Mammary epithelial cell (primary cell): ENCODE measurements at regions of chr15 and their contacts with region 1.

Region 1: GRCh38 chr15:33234014-33234461 is 39.5 kb upstream of the FMN1 start:
- DNase-seq: peak; percentile 67
- H3K4me3 ChIP-seq: no peak overlapping the region
- H3K27ac ChIP-seq: no peak overlapping the region
- H3K4me1 ChIP-seq: peaks cover 6% of the 10 kb centered on the region
- H3K27me3 ChIP-seq: no peaks in the 10 kb centered on the region
- CTCF ChIP-seq: peak; percentile 68 to 77

Region 2: DNA sequence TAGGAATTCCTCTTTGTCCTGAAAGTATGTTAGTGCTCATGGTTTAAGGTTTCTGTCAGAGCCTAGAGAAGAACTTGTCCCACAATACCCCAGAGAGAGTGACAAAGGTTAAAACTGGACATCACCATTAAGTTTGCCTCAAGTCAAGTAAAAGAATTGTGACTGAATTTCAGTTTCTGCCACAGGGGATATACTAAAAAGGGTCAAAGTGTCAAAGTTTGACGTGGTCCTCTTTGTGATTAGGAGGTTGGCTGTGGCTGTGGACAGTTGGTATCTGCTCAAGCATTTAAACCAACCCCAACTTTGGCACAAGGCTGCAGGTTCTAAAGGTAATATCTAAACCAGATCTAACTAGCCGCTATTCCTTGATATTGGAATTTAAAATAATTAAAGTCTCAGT is 65.6 kb before region 1 on chr15:
- CTCF ChIA-PET with region 1: no interaction called
- dilution Hi-C with region 1: no loop called
- in situ Hi-C with region 1: no loop called
- intact Hi-C with region 1: no loop called
- DNase-seq: no peak
- H3K4me3 ChIP-seq: no peak overlapping the region
- H3K27ac ChIP-seq: no peak overlapping the region
- H3K4me1 ChIP-seq: no peaks in the 10 kb centered on the region
- H3K27me3 ChIP-seq: no peaks in the 10 kb centered on the region
- CTCF ChIP-seq: no peak

Region 3: GRCh38 chr15:33309602-33310276 is 75.7 kb after region 1 on chr15:
- CTCF ChIA-PET with region 1: no interaction called
- dilution Hi-C with region 1: no loop called
- in situ Hi-C with region 1: no loop called
- intact Hi-C with region 1: no loop called
- DNase-seq: peak; percentile 17
- H3K4me3 ChIP-seq: no peak overlapping the region
- H3K27ac ChIP-seq: no peak overlapping the region
- H3K4me1 ChIP-seq: no peaks in the 10 kb centered on the region
- H3K27me3 ChIP-seq: peaks cover 16% of the 10 kb centered on the region
- CTCF ChIP-seq: no peak

Region 4: GRCh38 chr15:33535135-33535534 is 301.1 kb after region 1 on chr15:
- CTCF ChIA-PET with region 1: no interaction called
- dilution Hi-C with region 1: no loop called
- in situ Hi-C with region 1: no loop called
- intact Hi-C with region 1: no loop called
- DNase-seq: no peak
- H3K4me3 ChIP-seq: no peak overlapping the region
- H3K27ac ChIP-seq: no peak overlapping the region
- H3K4me1 ChIP-seq: no peaks in the 10 kb centered on the region
- H3K27me3 ChIP-seq: no peaks in the 10 kb centered on the region
- CTCF ChIP-seq: no peak

Region 5: DNA sequence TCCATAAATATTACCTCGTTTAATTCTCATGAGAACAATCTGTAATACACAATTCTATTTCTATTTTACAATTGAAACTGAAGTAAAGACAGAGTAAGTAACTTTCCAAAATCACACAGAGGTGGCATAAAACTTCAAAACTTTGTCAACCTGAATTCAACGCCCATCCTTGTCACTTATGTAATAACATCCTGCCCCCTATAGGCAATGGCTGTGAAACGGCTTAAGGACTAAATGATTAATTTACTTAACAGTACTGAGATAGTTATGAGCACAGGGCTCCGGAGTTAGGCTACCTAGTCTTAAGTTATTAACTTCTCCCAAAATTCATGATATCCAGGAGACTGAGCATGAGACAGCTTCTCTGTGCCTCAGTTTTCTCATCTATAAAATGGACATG is 441.2 kb after region 1 on chr15:
- CTCF ChIA-PET with region 1: no interaction called
- dilution Hi-C with region 1: no loop called
- in situ Hi-C with region 1: no loop called
- intact Hi-C with region 1: loop called (anchors 1 kb)
- DNase-seq: peak; percentile 27
- H3K4me3 ChIP-seq: no peak overlapping the region
- H3K27ac ChIP-seq: no peak overlapping the region
- H3K4me1 ChIP-seq: no peaks in the 10 kb centered on the region
- H3K27me3 ChIP-seq: peaks cover 4% of the 10 kb centered on the region
- CTCF ChIP-seq: peak; percentile 61 to 68

Region 6: GRCh38 chr15:33700695-33701304 is 466.8 kb after region 1 on chr15:
- CTCF ChIA-PET with region 1: no interaction called
- dilution Hi-C with region 1: no loop called
- in situ Hi-C with region 1: loop called (anchors 10 kb)
- intact Hi-C with region 1: loop called (anchors 1 kb)
- DNase-seq: peak; percentile 62
- H3K4me3 ChIP-seq: no peak overlapping the region
- H3K27ac ChIP-seq: no peak overlapping the region
- H3K4me1 ChIP-seq: no peaks in the 10 kb centered on the region
- H3K27me3 ChIP-seq: no peaks in the 10 kb centered on the region
- CTCF ChIP-seq: peak; percentile 95 to 99

Region 7: DNA sequence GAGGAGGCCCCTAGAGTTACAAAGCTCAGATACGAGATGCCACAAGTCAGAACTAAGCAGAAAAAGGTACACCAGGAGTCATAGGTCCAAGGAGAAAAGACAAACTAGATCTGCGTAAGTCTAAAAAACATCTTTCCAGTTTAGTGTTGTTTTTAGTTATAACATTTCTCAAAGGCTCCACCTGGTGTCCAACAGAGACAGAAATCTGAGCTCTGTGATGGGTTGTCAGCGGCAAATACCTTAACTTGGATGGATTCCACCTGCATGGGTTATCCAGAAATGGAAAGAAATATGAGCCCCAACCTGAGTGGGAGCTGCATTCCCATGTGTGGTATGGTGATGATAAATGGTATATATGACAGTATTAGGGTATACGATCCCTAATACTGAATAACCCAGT is 495.6 kb after region 1 on chr15:
- CTCF ChIA-PET with region 1: no interaction called
- dilution Hi-C with region 1: no loop called
- in situ Hi-C with region 1: loop called in 1 of 2 experiments (anchors 10 kb)
- intact Hi-C with region 1: loop called (anchors 1 kb)
- DNase-seq: peak; percentile 30
- H3K4me3 ChIP-seq: no peak overlapping the region
- H3K27ac ChIP-seq: no peak overlapping the region
- H3K4me1 ChIP-seq: no peaks in the 10 kb centered on the region
- H3K27me3 ChIP-seq: no peaks in the 10 kb centered on the region
- CTCF ChIP-seq: peak; percentile 14 to 46

Region 8: GRCh38 chr15:33963831-33964664 is 730.0 kb after region 1 on chr15:
- CTCF ChIA-PET with region 1: no interaction called
- dilution Hi-C with region 1: no loop called
- in situ Hi-C with region 1: no loop called
- intact Hi-C with region 1: loop called (anchors 5 kb)
- DNase-seq: peak; percentile 14
- H3K4me3 ChIP-seq: no peak overlapping the region
- H3K27ac ChIP-seq: no peak overlapping the region
- H3K4me1 ChIP-seq: no peaks in the 10 kb centered on the region
- H3K27me3 ChIP-seq: no peaks in the 10 kb centered on the region
- CTCF ChIP-seq: peak; percentile 60 to 73